ENCODE measurements at regions of chr6 and their contacts with region 1.

Region 1: DNA sequence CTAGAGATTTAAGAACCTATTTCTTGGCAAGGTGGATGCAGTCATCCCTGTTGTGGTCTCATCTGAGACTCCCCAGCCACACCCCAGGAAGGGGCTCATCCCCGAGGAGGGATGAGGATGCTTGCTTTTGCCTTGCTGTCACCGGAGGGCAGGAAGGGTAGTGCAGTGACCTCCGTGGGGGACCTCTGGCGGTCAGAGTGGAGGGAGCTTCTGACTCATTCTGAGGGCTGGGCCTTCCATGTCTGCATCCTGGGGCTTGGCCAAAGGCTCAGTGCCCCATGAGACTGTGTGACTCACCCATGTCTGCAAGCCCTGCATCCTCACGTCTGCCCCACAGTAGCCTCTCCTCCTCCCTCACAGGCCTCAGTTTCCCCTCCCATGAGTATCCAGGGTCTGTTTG is 38.7 kb downstream of the UQCC2 start:
- DNase-seq: peak; percentile 91
- H3K4me3 ChIP-seq: no peak overlapping the region
- H3K27ac ChIP-seq: no peak overlapping the region
- H3K4me1 ChIP-seq: peaks cover 11% of the 10 kb centered on the region
- H3K27me3 ChIP-seq: no peaks in the 10 kb centered on the region
- CTCF ChIP-seq: peak; percentile 74

Region 2: GRCh38 chr6:33579828-33580714 is 92.7 kb before region 1 on chr6 and contains the start of gene BAK1:
- intact Hi-C with region 1: loop called (anchors 10 kb)
- DNase-seq: peak; percentile 92
- H3K4me3 ChIP-seq: peak within 1 kb of the TSS; percentile 97
- H3K27ac ChIP-seq: peak within 1 kb of the TSS; percentile 92
- H3K4me1 ChIP-seq: peaks cover 43% of the 10 kb centered on the region
- H3K27me3 ChIP-seq: no peaks in the 10 kb centered on the region
- CTCF ChIP-seq: peak; percentile 66
- total RNA-seq, gene BAK1: 19.7 TPM

Region 3: GRCh38 chr6:33633462-33634158 is 39.2 kb before region 1 on chr6:
- intact Hi-C with region 1: no loop called
- DNase-seq: peak; percentile 72
- H3K4me3 ChIP-seq: peak overlapping the region; percentile 64
- H3K27ac ChIP-seq: peak overlapping the region; percentile 75
- H3K4me1 ChIP-seq: peaks cover 47% of the 10 kb centered on the region
- H3K27me3 ChIP-seq: no peaks in the 10 kb centered on the region
- CTCF ChIP-seq: no peak